IMR-90 (cell line): ENCODE measurements at regions of chr15 and their contacts with region 1.

Region 1: DNA sequence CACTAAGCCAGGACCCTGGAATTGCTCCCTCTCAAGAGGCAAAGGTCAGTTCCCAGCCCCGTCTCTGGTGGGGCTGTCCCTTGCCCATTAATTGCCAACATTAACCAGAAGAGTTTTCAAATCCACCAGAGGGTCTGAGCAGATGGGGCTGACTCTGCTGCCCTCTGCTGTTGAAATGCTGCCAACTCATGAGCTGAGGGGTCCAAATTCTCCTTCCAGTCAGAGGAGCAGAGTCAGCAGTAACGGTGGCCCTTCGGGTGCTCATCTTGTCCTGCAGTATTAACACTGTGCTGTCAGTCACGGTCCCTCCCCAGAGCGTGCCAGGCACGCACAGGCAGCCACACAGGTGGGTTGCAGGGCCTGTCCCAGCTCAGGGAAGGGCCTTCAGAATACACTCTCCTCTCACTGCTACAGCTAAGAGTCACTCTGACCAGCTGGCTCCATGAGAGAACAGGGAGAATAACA is 10.7 kb upstream of the SPTBN5 start:
- DNase-seq: peak; percentile 65
- ATAC-seq: peak; percentile 98
- H3K4me3 ChIP-seq: no peak overlapping the region
- H3K27ac ChIP-seq: no peak overlapping the region
- H3K4me1 ChIP-seq: no peaks in the 10 kb centered on the region
- H3K27me3 ChIP-seq: no peaks in the 10 kb centered on the region
- CTCF ChIP-seq: peak; percentile 85
- POLR2A ChIP-seq: no peak
- RAD21 ChIP-seq: peak; percentile 92

Region 2: GRCh38 chr15:40367686-40368611 is 1536.6 kb before region 1 on chr15:
- CTCF ChIA-PET with region 1: no interaction called
- POLR2A ChIA-PET with region 1: interaction called, 10 read pairs
- dilution Hi-C with region 1: no loop called
- in situ Hi-C with region 1: no loop called
- intact Hi-C with region 1: no loop called
- DNase-seq: peak; percentile 87
- ATAC-seq: peak; percentile 95
- H3K4me3 ChIP-seq: no peak overlapping the region
- H3K27ac ChIP-seq: no peak overlapping the region; the same call in 1 of the 2 replicates
- H3K4me1 ChIP-seq: peaks cover 2% of the 10 kb centered on the region
- H3K27me3 ChIP-seq: peaks cover 5% of the 10 kb centered on the region; the same call in 1 of the 2 replicates
- CTCF ChIP-seq: peak; percentile 95
- POLR2A ChIP-seq: no peak
- RAD21 ChIP-seq: peak; percentile 63

Region 3: DNA sequence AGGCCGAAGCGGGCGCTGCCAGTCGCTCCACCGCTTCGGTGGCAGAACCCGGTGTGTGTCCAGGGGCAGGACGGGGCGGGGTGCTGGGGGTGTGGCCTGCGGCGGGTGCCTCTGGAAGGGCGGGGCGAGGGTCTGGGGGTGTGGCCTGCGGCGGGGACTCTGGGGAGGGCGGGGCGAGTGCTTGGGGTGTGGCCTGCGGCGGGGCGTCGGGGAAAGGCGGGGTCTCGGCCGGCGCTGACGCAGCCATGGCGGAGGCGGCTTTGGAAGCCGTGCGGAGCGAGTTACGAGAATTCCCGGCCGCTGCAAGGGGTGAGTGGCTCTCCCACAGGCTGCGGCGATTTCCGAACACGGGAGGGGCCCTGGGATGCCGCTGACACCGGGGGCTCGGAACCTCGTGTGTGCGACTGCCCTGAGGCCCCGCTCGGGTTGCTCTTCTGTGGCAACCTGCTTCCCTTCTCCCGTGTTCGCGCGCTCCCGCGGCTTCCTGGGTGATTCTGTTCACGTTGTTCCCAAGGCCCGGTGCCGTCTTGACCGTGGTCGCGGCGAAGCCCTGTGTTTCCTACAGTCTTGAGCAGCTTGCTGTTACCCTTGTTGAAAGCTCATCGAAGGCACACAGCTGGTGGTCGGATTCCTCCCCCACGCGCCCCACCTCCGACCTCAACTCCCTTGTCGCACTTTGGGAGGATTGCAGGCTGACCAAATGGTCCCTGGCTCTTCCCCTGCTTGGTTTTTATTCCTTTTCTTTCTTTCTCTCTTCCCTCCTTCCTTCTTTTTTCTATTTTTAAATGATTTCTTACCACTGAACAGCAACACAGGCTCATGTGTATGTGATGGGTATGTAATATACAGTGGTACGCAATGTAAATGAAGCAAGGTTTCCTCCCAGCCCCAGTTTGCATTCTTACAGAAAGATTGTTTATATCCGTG is 76.4 kb before region 1 on chr15 and contains the start of gene JMJD7:
- CTCF ChIA-PET with region 1: no interaction called
- POLR2A ChIA-PET with region 1: no interaction called
- dilution Hi-C with region 1: no loop called
- in situ Hi-C with region 1: no loop called
- intact Hi-C with region 1: loop called (anchors 1 kb)
- DNase-seq: peak; percentile 81
- ATAC-seq: peak; percentile 97
- H3K4me3 ChIP-seq: peak within 1 kb of the TSS; percentile 73
- H3K27ac ChIP-seq: peak within 1 kb of the TSS; percentile 50
- H3K4me1 ChIP-seq: peaks cover 2% of the 10 kb centered on the region; the same call in 1 of the 2 replicates
- H3K27me3 ChIP-seq: no peaks in the 10 kb centered on the region
- CTCF ChIP-seq: no peak
- POLR2A ChIP-seq: peak; percentile 59; the same call in 1 of the 2 replicates
- RAD21 ChIP-seq: no peak
- total RNA-seq, gene JMJD7: 3.6 and 5.0 TPM in 2 replicates

Region 4: GRCh38 chr15:42056934-42057779 is 152.6 kb after region 1 on chr15:
- CTCF ChIA-PET with region 1: no interaction called
- POLR2A ChIA-PET with region 1: no interaction called
- dilution Hi-C with region 1: no loop called
- in situ Hi-C with region 1: no loop called
- intact Hi-C with region 1: no loop called
- DNase-seq: peak; percentile 62
- ATAC-seq: peak; percentile 94
- H3K4me3 ChIP-seq: peak overlapping the region; percentile 3; the same call in 1 of the 2 replicates
- H3K27ac ChIP-seq: no peak overlapping the region
- H3K4me1 ChIP-seq: no peaks in the 10 kb centered on the region
- H3K27me3 ChIP-seq: peaks cover 42% of the 10 kb centered on the region
- CTCF ChIP-seq: peak; percentile 52
- POLR2A ChIP-seq: no peak
- RAD21 ChIP-seq: peak; percentile 48

Region 5: GRCh38 chr15:42139596-42139995 is 235.0 kb after region 1 on chr15:
- CTCF ChIA-PET with region 1: no interaction called
- POLR2A ChIA-PET with region 1: no interaction called
- dilution Hi-C with region 1: no loop called
- in situ Hi-C with region 1: no loop called
- intact Hi-C with region 1: no loop called
- DNase-seq: no peak
- ATAC-seq: no peak
- H3K4me3 ChIP-seq: no peak overlapping the region
- H3K27ac ChIP-seq: no peak overlapping the region
- H3K4me1 ChIP-seq: no peaks in the 10 kb centered on the region
- H3K27me3 ChIP-seq: peaks cover 48% of the 10 kb centered on the region
- CTCF ChIP-seq: no peak
- POLR2A ChIP-seq: no peak
- RAD21 ChIP-seq: no peak